AG04449 (cell line): ENCODE measurements at regions of chr20 and their contacts with region 1.

Region 1: DNA sequence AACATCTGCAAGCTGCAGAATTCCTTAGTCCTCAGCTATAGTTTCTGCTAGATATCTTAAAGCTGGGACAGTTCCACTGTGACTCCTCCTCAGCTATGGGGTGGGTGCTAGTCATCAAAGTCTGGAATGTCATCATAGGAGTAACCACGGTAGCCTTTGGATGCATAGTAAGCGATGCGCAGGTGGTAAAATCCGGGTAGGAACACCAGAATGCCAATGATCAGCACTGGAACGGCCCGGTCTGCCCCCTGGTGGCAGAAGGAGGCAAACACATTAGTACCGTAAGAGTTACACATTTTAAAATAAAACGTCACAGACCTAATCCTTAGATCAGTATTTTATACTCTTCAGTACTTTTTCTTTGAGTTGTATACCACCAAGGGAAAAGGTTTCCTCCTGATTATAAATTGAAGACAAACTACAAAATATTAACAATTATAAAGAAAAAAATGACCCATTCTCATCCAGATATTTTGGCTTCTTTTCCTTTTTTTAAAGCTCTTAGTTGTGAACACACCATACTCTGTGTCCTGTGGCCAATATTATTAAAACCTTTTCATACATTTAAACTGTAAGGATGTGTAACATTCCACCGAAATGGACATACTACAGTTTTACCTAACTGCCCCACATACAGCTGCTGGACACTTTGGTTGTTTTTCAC is 18.9 kb downstream of the PCNA start:
- DNase-seq: no peak
- H3K4me3 ChIP-seq: no peak overlapping the region
- CTCF ChIP-seq: peak; percentile 72

Region 2: DNA sequence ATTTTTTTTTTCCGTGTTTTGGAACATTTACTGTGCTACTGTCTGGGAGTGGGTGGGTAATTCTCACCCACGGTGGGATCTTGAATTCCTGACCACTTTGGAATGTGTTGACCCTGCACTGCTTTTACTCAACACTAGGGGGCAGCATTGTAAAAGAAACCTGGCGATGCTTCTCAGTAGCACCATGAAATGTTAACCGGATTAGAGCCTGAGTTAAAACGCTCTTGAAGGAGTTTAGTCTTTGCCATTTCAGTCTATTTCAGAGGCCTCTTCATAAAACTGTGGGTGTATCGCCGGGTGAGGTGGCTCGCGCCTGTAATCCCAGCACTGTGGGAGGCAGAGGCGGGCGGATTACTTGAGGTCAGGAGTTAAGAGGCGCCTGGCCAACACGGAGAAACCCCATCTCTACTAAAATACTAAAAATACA is 493.5 kb before region 1 on chr20:
- CTCF ChIA-PET with region 1: interaction called, 21 read pairs
- POLR2A ChIA-PET with region 1: no interaction called
- DNase-seq: peak; percentile 21
- H3K4me3 ChIP-seq: no peak overlapping the region
- CTCF ChIP-seq: peak; percentile 80

Region 3: GRCh38 chr20:4956200-4956810 is 144.5 kb before region 1 on chr20:
- CTCF ChIA-PET with region 1: interaction called, 61 read pairs
- POLR2A ChIA-PET with region 1: no interaction called
- DNase-seq: no peak
- H3K4me3 ChIP-seq: no peak overlapping the region
- CTCF ChIP-seq: peak; percentile 64

Region 4: GRCh38 chr20:5000263-5001173 is 100.3 kb before region 1 on chr20:
- CTCF ChIA-PET with region 1: interaction called, 12 read pairs
- POLR2A ChIA-PET with region 1: no interaction called
- DNase-seq: no peak
- H3K4me3 ChIP-seq: peak overlapping the region; percentile 71
- CTCF ChIP-seq: no peak

Region 5: DNA sequence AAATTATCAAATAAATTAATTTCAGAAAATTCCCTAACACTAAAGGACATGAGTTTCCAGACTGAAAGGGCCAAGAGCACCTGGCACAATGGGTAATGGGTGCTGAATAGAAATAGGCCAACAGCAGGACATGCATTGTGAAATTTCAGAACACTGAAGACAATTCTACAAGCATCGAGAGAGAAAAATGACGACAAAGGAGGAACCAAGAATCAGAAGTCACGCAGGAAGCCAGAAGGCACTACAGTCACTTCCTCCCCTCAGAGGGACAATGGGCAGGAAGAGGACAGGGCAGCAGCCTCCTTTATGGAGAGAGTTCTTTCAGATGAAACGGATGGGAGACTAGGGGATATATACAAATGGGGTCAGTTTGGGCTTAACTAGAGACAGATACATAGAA is 10.6 kb before region 1 on chr20:
- CTCF ChIA-PET with region 1: interaction called, 49 read pairs
- POLR2A ChIA-PET with region 1: no interaction called
- DNase-seq: no peak
- H3K4me3 ChIP-seq: no peak overlapping the region
- CTCF ChIP-seq: no peak

Region 6: GRCh38 chr20:5135363-5136012 is 34.7 kb after region 1 on chr20:
- CTCF ChIA-PET with region 1: no interaction called
- POLR2A ChIA-PET with region 1: no interaction called
- DNase-seq: no peak
- H3K4me3 ChIP-seq: no peak overlapping the region
- CTCF ChIP-seq: no peak